CD4-positive, alpha-beta memory T cell (primary cell): ENCODE measurements at regions of chr2 and their contacts with region 1.

Region 1: DNA sequence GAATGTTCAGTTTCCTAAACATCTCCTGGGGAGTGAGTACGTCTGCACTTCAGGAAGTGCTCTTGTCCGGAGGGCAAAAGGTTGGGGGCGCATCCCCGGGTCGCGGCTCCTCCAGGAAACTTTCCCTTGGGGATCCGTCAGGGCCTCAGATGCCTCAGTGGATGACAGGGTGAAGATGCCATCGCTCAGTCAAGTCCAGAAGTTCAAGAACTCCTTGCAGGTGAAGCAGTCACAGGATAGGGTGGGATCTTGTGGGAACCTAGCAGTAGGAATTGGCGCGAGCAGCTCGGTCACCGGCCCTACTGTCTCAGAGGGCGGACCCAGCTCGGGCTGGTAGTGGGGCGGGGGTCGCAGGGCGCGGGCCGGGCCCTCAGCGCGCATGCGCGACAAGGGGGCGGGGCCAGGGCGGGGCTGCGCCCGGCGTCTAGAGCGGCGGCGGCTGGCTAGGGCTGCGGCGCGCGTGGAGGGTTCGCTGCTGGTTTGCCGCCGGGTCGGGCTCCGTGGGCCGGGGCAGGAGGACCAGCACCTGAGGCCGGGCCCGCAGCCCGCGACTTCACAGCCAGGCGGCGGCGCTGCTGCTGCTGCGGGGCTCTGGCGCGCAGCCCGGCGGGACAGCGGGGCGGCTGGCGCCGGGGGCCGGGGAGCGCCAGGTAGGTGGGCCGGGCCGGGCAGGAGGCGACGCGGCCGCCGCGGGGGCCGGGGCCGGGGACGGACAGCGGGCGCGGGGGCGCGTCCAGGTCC is at the start of gene INPP4A:
- DNase-seq: peak; percentile 75 to 79 (median 79)
- H3K4me3 ChIP-seq: peak within 1 kb of the TSS; percentile 84 to 88
- H3K4me3 Mint-ChIP-seq: peak within 1 kb of the TSS; percentile 92 to 99 (median 98)
- H3K27ac ChIP-seq: peak within 1 kb of the TSS; percentile 78
- H3K27ac Mint-ChIP-seq: peak within 1 kb of the TSS; percentile 92 to 99 (median 96)
- H3K4me1 ChIP-seq: peaks cover 44% of the 10 kb centered on the region
- H3K4me1 Mint-ChIP-seq: peaks cover 18 to 49% (median 38%) of the 10 kb centered on the region in 4 donors
- H3K27me3 ChIP-seq: no peaks in the 10 kb centered on the region
- H3K27me3 Mint-ChIP-seq: no peaks in the 10 kb centered on the region
- total RNA-seq, gene INPP4A: 133 TPM

Region 2: GRCh38 chr2:98158305-98158704 is 286.3 kb before region 1 on chr2:
- CTCF ChIA-PET with region 1: no interaction called
- POLR2A ChIA-PET with region 1: no interaction called
- intact Hi-C with region 1: no loop called
- DNase-seq: no peak
- H3K4me3 ChIP-seq: no peak overlapping the region
- H3K4me3 Mint-ChIP-seq: no peak overlapping the region
- H3K27ac ChIP-seq: no peak overlapping the region
- H3K27ac Mint-ChIP-seq: no peak overlapping the region
- H3K4me1 ChIP-seq: no peaks in the 10 kb centered on the region
- H3K4me1 Mint-ChIP-seq: no peaks in the 10 kb centered on the region
- H3K27me3 ChIP-seq: no peaks in the 10 kb centered on the region
- H3K27me3 Mint-ChIP-seq: peaks cover 3 to 20% of the 10 kb centered on the region in 2 donors

Region 3: DNA sequence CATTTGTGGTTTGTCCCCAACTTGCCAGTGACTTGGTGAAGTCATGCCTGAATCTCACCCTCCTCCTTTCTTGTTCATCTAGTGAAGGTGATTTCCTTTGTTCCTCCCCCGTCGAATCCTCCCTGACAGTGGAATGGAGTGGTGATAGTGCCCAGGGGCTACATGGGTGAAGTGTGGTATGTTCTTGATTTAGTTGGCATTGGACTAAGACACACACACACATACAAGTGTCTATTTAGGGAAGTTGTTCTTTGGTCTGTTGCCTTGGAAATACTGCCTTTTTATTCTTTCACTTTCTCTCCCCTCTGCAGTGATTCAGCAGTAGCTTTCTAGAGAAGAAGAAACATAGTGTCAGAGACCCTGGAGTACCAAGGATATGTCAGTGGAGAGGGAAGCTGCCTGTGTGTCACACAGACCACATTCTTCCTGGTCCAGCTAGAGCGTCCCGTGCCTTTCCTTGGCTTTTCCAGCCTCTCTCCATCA is 10.9 kb after region 1 on chr2:
- CTCF ChIA-PET with region 1: interaction called, 11 read pairs
- POLR2A ChIA-PET with region 1: interaction called, 338 read pairs
- intact Hi-C with region 1: loop called (anchors 1 kb)
- DNase-seq: peak; percentile 48 to 86 (median 64)
- H3K4me3 ChIP-seq: peak overlapping the region in 1 of 2 donors; percentile 18
- H3K4me3 Mint-ChIP-seq: peak overlapping the region; percentile 11 to 84 (median 69)
- H3K27ac ChIP-seq: peak overlapping the region; percentile 69
- H3K27ac Mint-ChIP-seq: peak overlapping the region; percentile 85 to 97 (median 94)
- H3K4me1 ChIP-seq: peaks cover 99% of the 10 kb centered on the region
- H3K4me1 Mint-ChIP-seq: peaks cover 80 to 100% (median 92%) of the 10 kb centered on the region in 4 donors
- H3K27me3 ChIP-seq: no peaks in the 10 kb centered on the region
- H3K27me3 Mint-ChIP-seq: no peaks in the 10 kb centered on the region

Region 4: DNA sequence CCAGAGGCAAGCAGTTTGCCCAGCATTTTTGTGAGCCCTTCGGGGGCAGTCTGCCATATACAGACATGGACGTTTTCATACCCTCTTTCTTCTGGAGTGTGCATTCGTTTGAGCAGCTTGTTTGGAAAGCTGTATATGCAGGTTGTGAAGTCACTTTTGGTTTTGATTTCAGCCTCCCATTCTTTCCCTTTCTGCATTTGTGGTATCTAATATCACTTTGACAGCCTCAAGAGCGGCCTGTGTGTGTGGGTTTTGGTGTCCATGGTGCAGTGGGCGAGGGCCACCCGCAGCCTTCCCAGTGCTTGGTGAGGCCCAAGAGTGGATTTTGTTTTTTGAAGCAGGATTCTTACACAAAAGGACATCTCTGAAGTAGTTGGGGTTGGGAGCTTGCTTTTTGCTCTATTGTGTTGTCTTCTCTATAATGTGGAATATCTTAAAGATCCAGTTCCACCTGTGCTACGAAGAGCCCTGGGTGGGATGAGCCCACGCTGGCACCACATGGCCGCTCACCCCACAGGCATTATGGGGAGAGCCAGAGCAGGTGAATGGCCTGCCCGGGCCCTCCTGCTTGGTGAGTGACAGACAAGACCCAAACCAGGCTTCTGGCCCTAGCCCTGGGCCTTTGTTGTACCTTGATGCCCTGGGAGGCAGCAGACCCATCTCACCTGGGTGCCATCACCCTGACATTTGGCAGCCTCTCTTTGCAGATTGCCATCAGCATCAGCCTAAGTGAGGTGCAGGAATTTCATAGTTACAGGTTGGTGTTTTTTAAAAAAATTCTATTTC is 29.6 kb after region 1 on chr2:
- CTCF ChIA-PET with region 1: interaction called, 17 read pairs
- POLR2A ChIA-PET with region 1: interaction called, 327 read pairs
- intact Hi-C with region 1: loop called (anchors 1 kb)
- DNase-seq: peak in 2 of 5 donors; percentile 33 to 45
- H3K4me3 ChIP-seq: peak overlapping the region in 1 of 2 donors; percentile 19
- H3K4me3 Mint-ChIP-seq: peak overlapping the region; percentile 76 to 92 (median 84)
- H3K27ac ChIP-seq: peak overlapping the region; percentile 35
- H3K27ac Mint-ChIP-seq: peak overlapping the region; percentile 85 to 98 (median 94)
- H3K4me1 ChIP-seq: peaks cover 98% of the 10 kb centered on the region
- H3K4me1 Mint-ChIP-seq: peaks cover 78 to 100% (median 89%) of the 10 kb centered on the region in 4 donors
- H3K27me3 ChIP-seq: no peaks in the 10 kb centered on the region
- H3K27me3 Mint-ChIP-seq: no peaks in the 10 kb centered on the region

Region 5: DNA sequence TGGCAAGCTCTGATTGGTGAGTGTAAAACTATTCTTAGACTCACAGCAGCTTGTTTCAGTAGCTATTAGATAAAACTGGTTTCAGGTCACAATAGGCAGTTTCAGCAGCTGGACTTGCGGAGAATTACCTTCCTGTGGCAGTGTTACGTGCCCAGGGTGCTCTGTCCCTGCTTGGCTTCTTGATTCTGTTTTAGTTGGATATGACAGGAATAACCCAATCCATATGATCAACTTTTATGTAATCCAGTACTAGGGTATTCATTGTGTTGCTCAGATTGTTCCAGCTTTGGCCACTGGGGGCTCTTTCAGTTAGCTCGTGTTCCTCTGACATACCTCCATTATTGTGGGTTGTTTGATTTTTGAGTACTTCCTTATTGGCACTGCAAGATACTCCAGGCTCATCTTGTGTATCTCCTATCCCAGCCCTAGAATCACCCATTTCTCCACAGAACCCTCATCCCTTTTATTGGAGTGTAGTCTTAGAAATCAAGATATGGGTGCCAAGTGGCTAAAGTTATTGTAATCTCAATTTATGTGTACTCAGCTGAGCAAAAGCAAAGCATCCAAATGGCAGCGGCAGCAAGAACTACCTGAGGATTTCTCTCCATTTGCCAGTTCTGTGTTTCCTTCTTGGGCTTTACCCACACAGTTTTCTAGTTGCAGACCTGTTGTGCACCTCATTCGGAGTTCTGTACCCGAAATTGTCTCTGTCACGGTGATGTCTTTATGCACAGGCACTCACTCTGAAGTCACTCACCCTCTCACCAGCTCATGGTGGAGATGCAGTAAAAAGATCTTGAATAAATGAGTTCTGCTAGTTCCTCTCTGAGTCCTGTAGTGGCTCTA is 43.4 kb after region 1 on chr2:
- CTCF ChIA-PET with region 1: interaction called, 36 read pairs
- POLR2A ChIA-PET with region 1: interaction called, 327 read pairs
- intact Hi-C with region 1: no loop called
- DNase-seq: peak in 4 of 5 donors; percentile 52 to 58 (median 56)
- H3K4me3 ChIP-seq: no peak overlapping the region
- H3K4me3 Mint-ChIP-seq: peak overlapping the region in 6 of 8 donors; percentile 3 to 61 (median 46)
- H3K27ac ChIP-seq: no peak overlapping the region
- H3K27ac Mint-ChIP-seq: peak overlapping the region; percentile 32 to 81 (median 70)
- H3K4me1 ChIP-seq: peaks cover 84% of the 10 kb centered on the region
- H3K4me1 Mint-ChIP-seq: peaks cover 74 to 100% (median 85%) of the 10 kb centered on the region in 4 donors
- H3K27me3 ChIP-seq: no peaks in the 10 kb centered on the region
- H3K27me3 Mint-ChIP-seq: no peaks in the 10 kb centered on the region